T-cell (primary cell): ENCODE measurements at regions of chr9 and their contacts with region 1.

Region 1: GRCh38 chr9:70362952-70363351 is 51.5 kb downstream of the KLF9 start:
- DNase-seq: no peak
- ATAC-seq: no peak
- H3K4me3 ChIP-seq: no peak overlapping the region
- H3K4me3 Mint-ChIP-seq: no peak overlapping the region
- H3K27ac ChIP-seq: no peak overlapping the region
- H3K27ac Mint-ChIP-seq: no peak overlapping the region
- H3K4me1 ChIP-seq: no peaks in the 10 kb centered on the region
- H3K4me1 Mint-ChIP-seq: no peaks in the 10 kb centered on the region
- H3K27me3 ChIP-seq: no peaks in the 10 kb centered on the region
- H3K27me3 Mint-ChIP-seq: no peaks in the 10 kb centered on the region

Region 2: DNA sequence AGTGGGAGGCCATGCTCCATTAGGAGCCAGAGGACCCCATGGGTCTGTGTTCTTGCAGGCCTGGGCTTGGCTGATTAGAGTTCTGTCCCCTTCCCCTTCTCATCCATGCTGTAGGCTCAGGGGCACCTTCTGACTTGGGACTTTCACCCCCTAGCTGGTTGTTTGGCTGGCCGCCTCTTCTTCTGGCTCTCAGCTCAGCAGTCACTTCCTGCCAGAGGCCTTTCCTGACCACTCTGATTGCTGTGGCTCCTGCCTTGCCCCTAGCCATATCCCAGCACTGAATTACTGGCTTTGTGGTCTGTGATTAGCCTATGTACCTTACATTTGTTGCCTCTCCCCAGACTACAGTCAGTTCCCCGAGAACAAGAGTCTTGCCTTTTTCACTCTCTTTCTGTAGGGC is 1023.3 kb before region 1 on chr9:
- CTCF ChIA-PET with region 1: no interaction called
- POLR2A ChIA-PET with region 1: no interaction called
- DNase-seq: no peak
- ATAC-seq: no peak
- H3K4me3 ChIP-seq: no peak overlapping the region
- H3K4me3 Mint-ChIP-seq: no peak overlapping the region
- H3K27ac ChIP-seq: no peak overlapping the region
- H3K27ac Mint-ChIP-seq: no peak overlapping the region
- H3K4me1 ChIP-seq: no peaks in the 10 kb centered on the region
- H3K4me1 Mint-ChIP-seq: no peaks in the 10 kb centered on the region
- H3K27me3 ChIP-seq: peaks cover 0 to 7% of the 10 kb centered on the region in 2 experiments
- H3K27me3 Mint-ChIP-seq: peaks cover 2 to 20% of the 10 kb centered on the region in 2 donors

Region 3: GRCh38 chr9:70318002-70318401 is 45.0 kb before region 1 on chr9:
- CTCF ChIA-PET with region 1: no interaction called
- POLR2A ChIA-PET with region 1: interaction called in 1 of 2 experiments, 13 read pairs
- DNase-seq: no peak
- ATAC-seq: no peak
- H3K4me3 ChIP-seq: no peak overlapping the region
- H3K4me3 Mint-ChIP-seq: no peak overlapping the region
- H3K27ac ChIP-seq: no peak overlapping the region
- H3K27ac Mint-ChIP-seq: no peak overlapping the region
- H3K4me1 ChIP-seq: no peaks in the 10 kb centered on the region
- H3K4me1 Mint-ChIP-seq: no peaks in the 10 kb centered on the region
- H3K27me3 ChIP-seq: no peaks in the 10 kb centered on the region
- H3K27me3 Mint-ChIP-seq: no peaks in the 10 kb centered on the region

Region 4: GRCh38 chr9:70413798-70414775 is 51.1 kb after region 1 on chr9 and contains the start of gene KLF9:
- CTCF ChIA-PET with region 1: no interaction called
- POLR2A ChIA-PET with region 1: no interaction called
- DNase-seq: peak; percentile 77 to 96 (median 92)
- ATAC-seq: peak; percentile 83 to 87 (median 84)
- H3K4me3 ChIP-seq: peak within 1 kb of the TSS; percentile 92 to 94
- H3K4me3 Mint-ChIP-seq: peak within 1 kb of the TSS; percentile 95 to 99 (median 95)
- H3K27ac ChIP-seq: peak within 1 kb of the TSS; percentile 99
- H3K27ac Mint-ChIP-seq: peak within 1 kb of the TSS; percentile 100
- H3K4me1 ChIP-seq: peaks cover 11 to 46% of the 10 kb centered on the region in 2 experiments
- H3K4me1 Mint-ChIP-seq: peaks cover 48 to 54% (median 50%) of the 10 kb centered on the region in 3 donors
- H3K27me3 ChIP-seq: no peaks in the 10 kb centered on the region
- H3K27me3 Mint-ChIP-seq: peaks cover 0 to 2% of the 10 kb centered on the region in 2 donors
- total RNA-seq, gene KLF9: 21.7 to 91.7 (median 23.6) TPM